ENCODE measurements at regions of chr6 and their contacts with region 1.

Region 1: DNA sequence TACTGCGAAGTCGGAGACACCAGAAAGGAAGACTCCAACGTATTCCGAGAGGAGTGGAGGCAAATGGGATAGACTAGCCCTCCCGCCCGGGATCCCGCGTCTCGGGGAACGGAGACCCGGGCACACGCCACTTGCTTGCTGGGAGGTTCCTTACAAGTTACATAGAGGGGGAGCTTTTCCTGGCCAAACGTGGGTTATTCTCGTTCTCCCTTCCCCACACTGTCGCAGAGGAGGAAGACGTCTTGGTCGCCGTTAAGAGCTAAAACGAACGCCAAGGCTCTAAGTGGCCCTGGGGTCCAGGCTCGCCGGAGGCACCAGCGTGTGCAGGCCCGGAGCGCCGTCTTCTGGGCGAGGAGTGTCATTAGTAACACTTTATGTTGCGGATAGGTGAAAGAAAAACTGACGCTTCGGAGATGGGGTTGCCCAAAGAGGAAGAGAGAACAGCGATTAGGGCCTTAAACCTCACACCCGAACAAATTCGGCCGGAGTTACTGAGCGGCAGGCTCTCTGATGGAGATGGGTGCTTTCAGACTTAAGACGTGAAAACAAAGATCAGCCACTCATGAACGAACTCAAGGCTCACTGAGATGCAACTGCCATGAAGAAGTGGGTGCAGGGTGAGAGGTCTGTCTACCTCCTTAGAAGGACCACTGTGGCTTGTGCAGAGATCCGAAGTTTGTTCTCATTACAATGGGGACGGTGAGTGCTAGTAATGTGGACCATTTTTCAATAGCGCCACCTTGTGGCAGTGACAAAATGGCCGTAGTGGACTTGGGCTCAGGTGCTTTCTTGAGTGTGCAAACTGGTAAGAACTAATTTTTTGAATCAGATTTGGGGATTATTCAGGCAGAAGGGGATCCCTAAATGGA is 11.7 kb upstream of the ZNF311 start:
- DNase-seq: peak; percentile 61 to 80
- ATAC-seq: peak; percentile 82 to 97 (median 92)
- H3K4me3 ChIP-seq: peak overlapping the region; percentile 4 to 62 (median 52)
- H3K27ac ChIP-seq: no peak overlapping the region
- H3K4me1 ChIP-seq: peaks cover 0 to 14% (median 9%) of the 10 kb centered on the region in 9 donors
- H3K27me3 ChIP-seq: peaks cover 0 to 77% (median 57%) of the 10 kb centered on the region in 7 donors
- CTCF ChIP-seq: peak; percentile 52 to 85 (median 81)

Region 2: DNA sequence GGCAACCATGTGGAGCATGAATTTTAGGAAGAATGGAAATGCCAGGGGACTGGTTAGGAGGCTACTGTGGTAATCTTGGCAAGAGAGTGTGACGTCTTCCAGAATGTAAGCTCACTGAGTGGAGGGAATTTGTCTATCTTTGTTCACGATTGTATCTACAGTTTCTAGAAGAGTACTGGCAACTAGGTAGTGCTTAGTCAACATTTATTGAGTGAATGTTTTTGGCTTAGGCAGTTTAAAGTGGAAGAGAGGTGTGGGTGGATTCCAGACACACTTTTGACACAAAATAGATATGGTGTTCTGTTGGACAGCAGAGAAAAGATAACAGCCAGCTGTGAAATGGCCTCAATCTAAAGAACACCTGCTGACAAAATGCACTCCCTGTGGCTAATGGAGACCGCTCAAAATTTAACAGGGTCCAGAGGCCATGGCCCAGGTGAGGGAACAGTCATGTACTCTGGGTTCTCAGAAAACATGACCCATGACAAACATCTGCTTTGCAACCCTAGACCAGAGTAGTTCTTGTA is 351.9 kb before region 1 on chr6:
- intact Hi-C with region 1: no loop called
- DNase-seq: no peak
- ATAC-seq: no peak
- H3K4me3 ChIP-seq: no peak overlapping the region
- H3K27ac ChIP-seq: no peak overlapping the region
- H3K4me1 ChIP-seq: no peaks in the 10 kb centered on the region
- H3K27me3 ChIP-seq: peaks cover 0 to 29% (median 24%) of the 10 kb centered on the region in 7 donors
- CTCF ChIP-seq: no peak

Region 3: GRCh38 chr6:28683944-28684538 is 332.8 kb before region 1 on chr6:
- intact Hi-C with region 1: loop called (anchors 1 to 5 kb)
- DNase-seq: no peak
- ATAC-seq: peak in 1 of 8 donors; percentile 47
- H3K4me3 ChIP-seq: no peak overlapping the region
- H3K27ac ChIP-seq: no peak overlapping the region
- H3K4me1 ChIP-seq: peaks cover 0 to 10% (median 0%) of the 10 kb centered on the region in 9 donors
- H3K27me3 ChIP-seq: peaks cover 14 to 90% (median 78%) of the 10 kb centered on the region in 7 donors
- CTCF ChIP-seq: peak; percentile 14 to 56 (median 42)

Region 4: GRCh38 chr6:28880894-28881780 is 135.7 kb before region 1 on chr6:
- intact Hi-C with region 1: no loop called
- DNase-seq: peak; percentile 53 to 68
- ATAC-seq: peak; percentile 53 to 87 (median 80)
- H3K4me3 ChIP-seq: peak overlapping the region; percentile 7 to 68 (median 58)
- H3K27ac ChIP-seq: peak overlapping the region in 1 of 10 donors; percentile 30
- H3K4me1 ChIP-seq: peaks cover 0 to 15% (median 0%) of the 10 kb centered on the region in 9 donors
- H3K27me3 ChIP-seq: peaks cover 0 to 39% (median 29%) of the 10 kb centered on the region in 7 donors
- CTCF ChIP-seq: no peak

Region 5: GRCh38 chr6:28981833-28982475 is 34.8 kb before region 1 on chr6:
- intact Hi-C with region 1: loop called in 2 of 10 experiments (anchors 1 to 5 kb)
- DNase-seq: peak; percentile 72 to 86
- ATAC-seq: peak; percentile 72 to 90 (median 86)
- H3K4me3 ChIP-seq: peak overlapping the region; percentile 42 to 71 (median 66)
- H3K27ac ChIP-seq: peak overlapping the region; percentile 21 to 76 (median 68)
- H3K4me1 ChIP-seq: peaks cover 0 to 47% (median 6%) of the 10 kb centered on the region in 9 donors
- H3K27me3 ChIP-seq: peaks cover 0 to 18% (median 14%) of the 10 kb centered on the region in 7 donors
- CTCF ChIP-seq: peak in 5 of 9 donors; percentile 15 to 40 (median 23)

Region 6: GRCh38 chr6:29589423-29590048 is 572.7 kb after region 1 on chr6:
- intact Hi-C with region 1: loop called in 1 of 10 experiments (anchors 5 kb)
- DNase-seq: peak in 1 of 2 donors; percentile 31
- ATAC-seq: peak in 2 of 8 donors; percentile 52 to 62
- H3K4me3 ChIP-seq: no peak overlapping the region
- H3K27ac ChIP-seq: no peak overlapping the region
- H3K4me1 ChIP-seq: no peaks in the 10 kb centered on the region
- H3K27me3 ChIP-seq: peaks cover 0 to 27% (median 17%) of the 10 kb centered on the region in 7 donors
- CTCF ChIP-seq: peak; percentile 81 to 97 (median 92)